ENCODE measurements at regions of chr16 and their contacts with region 1.

Region 1: DNA sequence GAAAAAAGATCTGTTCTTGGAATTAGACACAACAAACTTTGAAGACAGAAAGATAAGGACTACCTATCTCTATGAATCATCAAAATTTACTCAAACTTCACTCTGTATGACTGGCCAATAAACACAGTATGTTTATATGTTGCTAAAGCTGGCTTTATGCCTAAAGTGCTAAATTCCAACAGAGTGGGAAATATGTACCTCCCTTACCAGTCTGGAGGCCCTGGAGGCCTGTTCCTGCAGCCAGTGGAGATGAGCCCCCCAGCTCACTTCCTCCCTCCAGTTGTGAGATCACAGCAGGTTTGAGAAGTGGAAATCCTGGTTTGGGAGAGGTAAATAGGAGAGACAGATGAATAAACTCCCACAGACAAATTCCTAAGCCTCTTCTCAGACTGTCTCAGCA is 9.0 kb downstream of the ZNF23 start:
- DNase-seq: no peak
- H3K4me3 ChIP-seq: no peak overlapping the region
- H3K27ac ChIP-seq: no peak overlapping the region
- H3K4me1 ChIP-seq: no peaks in the 10 kb centered on the region
- H3K27me3 ChIP-seq: no peaks in the 10 kb centered on the region
- CTCF ChIP-seq: no peak
- EP300 ChIP-seq: no peak
- POLR2A ChIP-seq: no peak

Region 2: DNA sequence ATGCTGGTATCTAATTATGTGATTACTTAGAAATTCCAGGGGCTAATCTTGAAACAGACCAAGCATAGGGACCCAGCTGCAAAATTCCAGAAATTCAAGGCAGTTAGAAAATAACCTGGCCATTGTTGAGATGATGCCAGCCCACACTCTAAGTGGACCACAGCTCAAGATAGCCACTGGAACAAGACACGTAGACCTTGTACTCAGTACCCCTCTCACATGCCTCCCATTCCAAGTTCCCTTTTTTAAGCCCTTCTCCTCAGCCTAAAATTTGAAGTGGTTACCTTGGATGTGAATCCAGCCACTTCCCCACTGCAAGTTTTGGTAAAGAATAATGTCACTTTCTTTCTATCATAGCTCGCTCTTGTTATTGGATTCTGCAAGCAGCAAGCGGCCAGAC is 40.2 kb after region 1 on chr16:
- intact Hi-C with region 1: loop called (anchors 5 kb)
- DNase-seq: no peak
- H3K4me3 ChIP-seq: no peak overlapping the region
- H3K27ac ChIP-seq: no peak overlapping the region
- H3K4me1 ChIP-seq: no peaks in the 10 kb centered on the region
- H3K27me3 ChIP-seq: no peaks in the 10 kb centered on the region
- CTCF ChIP-seq: no peak
- EP300 ChIP-seq: no peak
- POLR2A ChIP-seq: no peak

Measured in sigmoid colon (tissue), 7 donors.